Sigmoid colon (tissue), 7 donors: ENCODE measurements at regions of chr16 and their contacts with region 1.

Region 1: GRCh38 chr16:57802341-57803133 is at the start of gene KIFC3:
- DNase-seq: peak; percentile 92
- H3K4me3 ChIP-seq: peak within 1 kb of the TSS; percentile 48 to 77 (median 66)
- H3K27ac ChIP-seq: peak within 1 kb of the TSS; percentile 83 to 92 (median 84)
- H3K4me1 ChIP-seq: peaks cover 0 to 69% (median 53%) of the 10 kb centered on the region in 4 donors
- H3K27me3 ChIP-seq: no peaks in the 10 kb centered on the region
- CTCF ChIP-seq: no peak
- EP300 ChIP-seq: no peak
- POLR2A ChIP-seq: no peak
- total RNA-seq, gene KIFC3: 10.0 to 31.2 (median 21.6) TPM

Region 2: DNA sequence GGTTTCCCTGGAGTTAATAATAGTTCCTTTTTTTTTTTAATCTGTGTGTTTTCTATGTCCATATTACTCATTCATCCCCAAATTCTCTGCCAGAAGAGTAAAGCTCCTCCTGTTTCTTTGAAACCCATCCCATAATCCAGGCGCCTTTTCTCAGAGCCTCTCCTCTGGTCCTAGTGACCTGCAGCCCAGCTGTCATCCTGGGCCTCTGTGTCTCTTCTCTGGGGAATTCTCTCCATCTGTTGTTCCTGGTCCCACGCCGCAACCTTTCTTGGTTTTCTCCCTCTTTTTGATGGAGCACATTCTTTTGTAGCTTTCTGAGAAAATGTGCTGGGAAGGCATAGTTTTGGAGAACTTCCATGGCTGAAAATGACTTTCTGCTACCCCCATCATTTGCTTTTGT is 56.8 kb before region 1 on chr16:
- intact Hi-C with region 1: no loop called
- DNase-seq: no peak
- H3K4me3 ChIP-seq: no peak overlapping the region
- H3K27ac ChIP-seq: no peak overlapping the region
- H3K4me1 ChIP-seq: no peaks in the 10 kb centered on the region
- H3K27me3 ChIP-seq: no peaks in the 10 kb centered on the region
- CTCF ChIP-seq: no peak
- EP300 ChIP-seq: no peak
- POLR2A ChIP-seq: no peak

Region 3: GRCh38 chr16:57757326-57757786 is 45.2 kb before region 1 on chr16:
- intact Hi-C with region 1: loop called (anchors 2 kb)
- DNase-seq: peak; percentile 89
- H3K4me3 ChIP-seq: no peak overlapping the region
- H3K27ac ChIP-seq: peak overlapping the region in 1 of 4 donors; percentile 42
- H3K4me1 ChIP-seq: peaks cover 0 to 9% (median 2%) of the 10 kb centered on the region in 4 donors
- H3K27me3 ChIP-seq: no peaks in the 10 kb centered on the region
- CTCF ChIP-seq: peak; percentile 68 to 97 (median 87)
- EP300 ChIP-seq: no peak
- POLR2A ChIP-seq: no peak

Region 4: DNA sequence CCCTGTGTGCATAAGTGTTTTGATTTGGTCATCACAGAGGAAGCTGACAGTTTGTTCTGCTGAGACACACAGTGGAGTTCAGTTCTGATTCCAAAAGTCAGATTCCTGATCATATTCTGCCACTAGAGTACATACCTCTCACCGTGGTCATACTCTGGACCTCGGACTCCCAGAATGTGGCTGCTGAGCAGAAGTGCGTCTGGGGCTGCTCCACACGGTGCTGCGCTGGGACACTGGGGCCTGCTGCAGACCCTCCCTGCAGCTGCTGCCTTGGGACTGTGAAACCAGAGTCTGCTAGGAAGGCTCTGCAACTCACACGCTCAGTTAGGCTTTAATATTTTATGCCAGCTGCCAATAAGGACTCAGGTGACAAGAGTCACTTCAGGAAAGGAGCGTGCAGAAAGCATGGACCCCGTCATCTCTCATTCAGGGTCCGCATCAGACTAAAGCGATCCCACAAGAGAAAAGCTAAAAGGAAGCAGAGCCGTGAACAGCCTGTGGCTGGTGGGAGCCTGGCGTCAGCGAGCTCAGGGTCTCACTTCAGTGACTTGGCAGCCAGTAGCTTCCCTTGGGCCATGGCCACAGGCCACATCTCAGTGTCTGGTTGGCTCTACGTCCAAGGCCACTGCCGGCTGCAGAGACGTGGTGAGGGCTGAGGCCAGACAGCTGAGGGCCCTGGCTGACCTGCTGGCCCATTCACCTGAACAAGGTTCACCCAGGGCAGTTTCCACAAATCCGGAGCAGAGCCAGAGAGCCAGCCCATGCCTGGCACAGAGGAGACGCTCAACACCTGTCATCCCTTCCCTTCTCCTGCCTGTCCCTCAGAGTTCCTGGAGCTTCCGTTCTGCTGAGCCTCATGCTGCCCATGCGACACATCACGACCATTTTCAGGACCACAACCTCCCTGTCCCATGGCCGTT is 24.4 kb after region 1 on chr16:
- intact Hi-C with region 1: no loop called
- DNase-seq: no peak
- H3K4me3 ChIP-seq: no peak overlapping the region
- H3K27ac ChIP-seq: no peak overlapping the region
- H3K4me1 ChIP-seq: peaks cover 0 to 4% (median 0%) of the 10 kb centered on the region in 4 donors
- H3K27me3 ChIP-seq: no peaks in the 10 kb centered on the region
- CTCF ChIP-seq: no peak
- EP300 ChIP-seq: no peak
- POLR2A ChIP-seq: no peak

Region 5: GRCh38 chr16:57863434-57864160 is 61.1 kb after region 1 on chr16:
- intact Hi-C with region 1: loop called (anchors 2 kb)
- DNase-seq: peak; percentile 83
- H3K4me3 ChIP-seq: no peak overlapping the region
- H3K27ac ChIP-seq: no peak overlapping the region
- H3K4me1 ChIP-seq: peaks cover 0 to 7% (median 3%) of the 10 kb centered on the region in 4 donors
- H3K27me3 ChIP-seq: no peaks in the 10 kb centered on the region
- CTCF ChIP-seq: peak in 3 of 4 experiments; percentile 33 to 61 (median 33)
- EP300 ChIP-seq: no peak
- POLR2A ChIP-seq: no peak

Region 6: DNA sequence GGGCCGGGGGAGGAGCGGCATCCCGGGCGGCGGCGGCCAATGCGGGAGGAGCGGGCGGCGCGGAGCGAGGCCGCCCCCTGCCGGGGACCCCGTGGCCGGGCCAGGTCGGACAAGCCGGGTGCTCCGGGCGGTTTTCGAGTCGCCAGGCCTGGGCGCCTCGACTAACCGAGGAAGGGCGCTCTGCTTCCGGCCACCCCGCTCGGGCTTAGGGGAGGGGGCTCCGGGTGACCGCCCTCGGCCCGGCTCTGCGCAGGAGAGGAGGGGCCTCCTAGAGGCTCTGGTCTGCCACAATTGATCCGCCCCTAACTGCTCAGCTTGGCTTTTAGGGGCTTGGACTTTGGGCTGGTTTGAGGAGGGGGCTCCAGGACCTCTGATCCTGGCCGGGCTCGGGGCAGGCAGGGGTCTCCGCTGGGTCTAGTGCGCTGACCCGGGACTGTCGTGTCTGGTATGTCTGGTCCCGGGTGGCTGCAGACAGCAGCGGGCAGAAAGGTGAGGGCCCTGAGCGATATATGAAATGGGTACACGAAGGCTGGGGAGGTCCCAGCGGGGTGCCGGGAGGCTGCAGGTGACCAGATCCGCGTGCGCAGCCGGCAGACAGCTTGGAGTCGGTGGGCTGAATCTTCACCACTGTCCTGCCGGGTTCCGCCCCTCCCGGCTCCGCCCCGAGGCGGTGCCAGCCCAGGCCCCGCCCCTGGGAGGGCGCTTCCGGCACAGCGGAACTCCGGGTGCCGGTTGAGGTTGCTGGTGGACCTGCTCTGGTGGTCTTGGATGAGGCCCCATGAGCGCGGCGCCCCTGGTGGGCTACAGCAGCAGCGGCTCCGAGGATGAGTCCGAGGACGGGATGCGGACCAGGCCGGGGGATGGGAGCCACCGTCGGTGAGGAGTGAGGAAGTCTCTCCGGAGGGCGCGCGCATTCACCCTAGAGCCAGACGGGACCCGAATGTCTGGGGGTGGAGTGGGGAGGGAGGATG is 198.5 kb after region 1 on chr16 and contains the start of gene USB1:
- intact Hi-C with region 1: loop called (anchors 5 kb)
- DNase-seq: peak; percentile 92
- H3K4me3 ChIP-seq: peak within 1 kb of the TSS; percentile 48 to 91 (median 82)
- H3K27ac ChIP-seq: peak within 1 kb of the TSS; percentile 93 to 98 (median 96)
- H3K4me1 ChIP-seq: peaks cover 0 to 45% (median 30%) of the 10 kb centered on the region in 4 donors
- H3K27me3 ChIP-seq: no peaks in the 10 kb centered on the region
- CTCF ChIP-seq: peak in 3 of 4 experiments; percentile 22 to 63 (median 58)
- EP300 ChIP-seq: no peak
- POLR2A ChIP-seq: peak; percentile 69 to 79
- total RNA-seq, gene USB1: 19.9 to 44.9 (median 34.9) TPM

Region 7: DNA sequence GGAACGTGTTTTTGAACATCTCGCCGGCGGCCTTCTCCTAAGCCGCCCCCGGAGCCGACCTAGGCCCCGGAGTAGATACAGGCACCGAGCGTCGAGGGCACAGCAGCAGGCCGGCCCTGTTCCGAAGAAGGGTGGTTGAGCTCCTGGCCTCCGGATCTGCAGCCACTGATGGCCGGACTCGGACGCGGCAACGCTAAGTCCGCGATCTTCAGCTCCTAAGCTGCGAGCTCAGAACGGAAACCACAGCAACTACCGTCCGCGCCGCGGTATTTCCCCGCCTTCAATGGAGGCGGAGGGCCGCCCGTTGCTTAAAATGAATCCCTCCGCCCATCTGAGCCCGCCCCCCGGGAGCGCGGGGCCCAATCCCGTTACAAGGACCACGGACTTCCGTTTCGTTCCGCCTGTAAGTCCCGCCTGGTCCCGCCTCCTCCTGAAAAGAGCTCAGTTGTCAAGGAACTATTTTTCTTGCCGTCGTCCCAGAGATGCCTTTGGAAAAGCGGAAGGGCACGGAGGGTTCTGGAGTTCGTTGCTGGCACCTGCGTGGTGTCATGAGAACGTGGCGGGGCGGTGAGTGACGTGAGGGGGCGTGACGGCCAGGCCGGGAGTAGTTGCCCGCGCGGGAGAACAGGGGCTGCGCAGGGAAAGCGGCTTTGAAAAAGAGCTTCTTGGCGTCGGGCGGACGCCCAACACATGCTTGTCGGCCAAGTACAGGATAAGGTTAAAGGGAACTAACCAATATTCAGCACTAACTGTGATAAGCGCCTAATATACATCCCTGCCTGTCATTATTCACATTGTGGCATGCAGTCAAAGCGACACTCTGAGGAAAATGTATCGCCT is 326.8 kb after region 1 on chr16 and contains the start of gene CFAP20:
- intact Hi-C with region 1: loop called (anchors 10 kb)
- DNase-seq: peak; percentile 99
- H3K4me3 ChIP-seq: peak within 1 kb of the TSS; percentile 73 to 92 (median 84)
- H3K27ac ChIP-seq: peak within 1 kb of the TSS; percentile 89 to 95 (median 92)
- H3K4me1 ChIP-seq: peaks cover 0 to 41% (median 39%) of the 10 kb centered on the region in 4 donors
- H3K27me3 ChIP-seq: no peaks in the 10 kb centered on the region
- CTCF ChIP-seq: no peak
- EP300 ChIP-seq: peak in 2 of 4 donors; percentile 52 to 73
- POLR2A ChIP-seq: peak; percentile 86 to 88
- total RNA-seq, gene CFAP20: 11.9 to 42.5 (median 26.6) TPM